ENCODE measurements at regions of chr4 and their contacts with region 1.

Region 1: DNA sequence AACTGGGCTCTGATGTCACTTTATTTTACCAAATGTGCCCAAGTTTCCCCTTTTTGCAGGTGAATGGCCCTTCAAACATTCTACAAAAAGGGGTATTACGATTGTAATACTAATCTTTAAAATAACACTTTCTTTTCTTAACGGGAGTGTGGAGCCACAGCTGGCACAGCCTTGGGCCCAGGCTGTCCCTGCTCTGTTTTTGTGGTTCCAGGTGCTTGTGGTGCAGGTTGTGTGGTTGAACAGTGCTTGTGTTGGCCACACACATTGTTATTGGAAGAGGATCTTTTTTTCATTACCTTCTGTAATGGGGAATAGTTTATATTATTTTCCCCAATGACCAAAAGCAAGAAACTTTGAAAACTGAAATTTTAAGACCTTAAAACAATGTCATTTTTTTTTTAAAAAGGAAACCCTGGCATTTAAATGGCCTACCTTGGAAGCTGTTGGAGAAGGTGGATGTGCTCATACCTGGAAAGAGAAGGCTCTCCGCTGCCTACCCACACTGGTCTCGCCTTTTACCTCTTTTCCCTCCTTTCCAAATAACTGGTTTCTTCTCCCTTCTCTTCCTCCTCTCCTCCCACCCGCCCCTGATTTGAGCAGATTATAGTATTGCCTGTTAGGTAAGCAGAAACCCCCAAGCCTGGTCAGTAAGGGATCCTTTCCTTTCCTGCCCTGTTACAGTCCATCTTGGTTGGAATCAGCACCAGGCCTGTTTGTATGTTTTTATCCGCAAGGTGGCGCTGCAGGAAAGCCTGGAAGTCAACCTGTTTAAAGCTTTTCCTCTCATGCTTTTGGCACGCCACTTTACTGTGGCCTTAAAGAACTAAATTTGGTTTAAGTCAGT is 28.6 kb downstream of the HADH start:
- DNase-seq: peak; percentile 55
- ATAC-seq: peak; percentile 90
- H3K4me3 ChIP-seq: no peak overlapping the region
- H3K27ac ChIP-seq: no peak overlapping the region
- H3K4me1 ChIP-seq: no peaks in the 10 kb centered on the region
- H3K27me3 ChIP-seq: no peaks in the 10 kb centered on the region
- CTCF ChIP-seq: peak; percentile 60 to 92 (median 80); a peak in 5 of 6 replicates
- POLR2A ChIP-seq: no peak
- RAD21 ChIP-seq: peak; percentile 79

Region 2: DNA sequence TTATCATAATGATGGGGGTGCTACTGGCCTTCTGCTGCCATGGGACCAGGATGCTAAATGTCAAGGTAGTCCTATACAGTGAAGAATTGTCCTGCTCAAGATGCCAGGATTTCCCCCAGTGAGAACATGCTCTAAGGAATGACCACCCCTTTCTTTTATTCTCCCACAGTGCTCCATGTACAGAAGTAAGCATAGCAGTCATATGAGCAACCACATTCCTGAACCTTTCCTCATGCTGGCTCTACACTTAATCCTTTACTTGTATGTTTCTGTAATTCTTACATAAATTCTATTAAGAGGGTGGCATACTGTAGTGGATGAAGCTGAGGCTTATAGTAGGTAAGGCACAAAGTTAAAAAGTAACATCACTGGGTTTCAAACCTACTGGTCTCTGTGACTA is 66.7 kb before region 1 on chr4:
- CTCF ChIA-PET with region 1: no interaction called
- POLR2A ChIA-PET with region 1: no interaction called
- RAD21 ChIA-PET with region 1: no interaction called
- intact Hi-C with region 1: no loop called
- DNase-seq: no peak
- ATAC-seq: no peak
- H3K4me3 ChIP-seq: no peak overlapping the region
- H3K27ac ChIP-seq: no peak overlapping the region
- H3K4me1 ChIP-seq: no peaks in the 10 kb centered on the region
- H3K27me3 ChIP-seq: no peaks in the 10 kb centered on the region
- CTCF ChIP-seq: no peak
- POLR2A ChIP-seq: no peak
- RAD21 ChIP-seq: no peak

Region 3: GRCh38 chr4:108060164-108060563 is 41.9 kb after region 1 on chr4:
- CTCF ChIA-PET with region 1: interaction called, 11 read pairs
- POLR2A ChIA-PET with region 1: no interaction called
- RAD21 ChIA-PET with region 1: no interaction called
- intact Hi-C with region 1: no loop called
- DNase-seq: peak; percentile 41
- ATAC-seq: peak; percentile 66
- H3K4me3 ChIP-seq: no peak overlapping the region
- H3K27ac ChIP-seq: no peak overlapping the region
- H3K4me1 ChIP-seq: peaks cover 0 to 22% of the 10 kb centered on the region in 2 experiments; a peak in 2 of 4 replicates
- H3K27me3 ChIP-seq: no peaks in the 10 kb centered on the region
- CTCF ChIP-seq: peak; percentile 32 to 57 (median 42); a peak in 4 of 6 replicates
- POLR2A ChIP-seq: no peak
- RAD21 ChIP-seq: peak; percentile 82

Region 4: GRCh38 chr4:108492816-108493595 is 474.7 kb after region 1 on chr4:
- CTCF ChIA-PET with region 1: interaction called, 3 read pairs
- POLR2A ChIA-PET with region 1: no interaction called
- RAD21 ChIA-PET with region 1: interaction called in 1 of 2 experiments, 3 read pairs
- intact Hi-C with region 1: loop called (anchors 2 kb)
- DNase-seq: peak; percentile 21
- ATAC-seq: peak; percentile 100
- H3K4me3 ChIP-seq: no peak overlapping the region
- H3K27ac ChIP-seq: no peak overlapping the region
- H3K4me1 ChIP-seq: no peaks in the 10 kb centered on the region
- H3K27me3 ChIP-seq: no peaks in the 10 kb centered on the region
- CTCF ChIP-seq: peak; percentile 35 to 75 (median 73); a peak in 5 of 6 replicates
- POLR2A ChIP-seq: no peak
- RAD21 ChIP-seq: peak; percentile 69

Region 5: GRCh38 chr4:108570993-108571569 is 552.8 kb after region 1 on chr4:
- CTCF ChIA-PET with region 1: interaction called, 30 read pairs
- POLR2A ChIA-PET with region 1: no interaction called
- RAD21 ChIA-PET with region 1: interaction called in 1 of 2 experiments, 6 read pairs
- intact Hi-C with region 1: loop called (anchors 2 kb)
- DNase-seq: no peak
- ATAC-seq: no peak
- H3K4me3 ChIP-seq: no peak overlapping the region
- H3K27ac ChIP-seq: no peak overlapping the region
- H3K4me1 ChIP-seq: no peaks in the 10 kb centered on the region
- H3K27me3 ChIP-seq: no peaks in the 10 kb centered on the region
- CTCF ChIP-seq: no peak
- POLR2A ChIP-seq: no peak
- RAD21 ChIP-seq: no peak

Region 6: DNA sequence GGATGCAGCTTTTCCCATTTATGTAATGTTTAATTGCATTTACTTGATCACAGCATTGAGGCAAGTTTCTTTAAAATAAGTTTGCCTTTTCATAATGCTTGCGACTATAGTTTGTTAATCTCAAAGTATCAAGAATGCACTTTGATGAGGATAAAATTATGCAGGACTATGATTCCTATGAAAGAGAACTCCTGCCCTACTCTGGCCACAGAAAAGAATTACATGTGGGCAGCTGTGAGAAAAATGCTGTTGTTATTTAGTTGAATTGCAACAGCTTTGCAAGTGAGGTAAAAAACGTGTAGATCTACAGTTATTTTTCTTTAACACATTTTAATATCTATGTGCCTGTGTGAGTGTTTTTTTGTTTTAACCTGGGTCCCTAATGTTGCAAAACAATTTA is 619.6 kb after region 1 on chr4:
- CTCF ChIA-PET with region 1: interaction called, 5 read pairs
- POLR2A ChIA-PET with region 1: no interaction called
- RAD21 ChIA-PET with region 1: no interaction called
- intact Hi-C with region 1: loop called (anchors 5 kb)
- DNase-seq: no peak
- ATAC-seq: no peak
- H3K4me3 ChIP-seq: no peak overlapping the region
- H3K27ac ChIP-seq: no peak overlapping the region
- H3K4me1 ChIP-seq: no peaks in the 10 kb centered on the region
- H3K27me3 ChIP-seq: no peaks in the 10 kb centered on the region
- CTCF ChIP-seq: peak in 1 of 3 experiments; percentile 28; a peak in 1 of 6 replicates
- POLR2A ChIP-seq: no peak
- RAD21 ChIP-seq: peak; percentile 41

Region 7: DNA sequence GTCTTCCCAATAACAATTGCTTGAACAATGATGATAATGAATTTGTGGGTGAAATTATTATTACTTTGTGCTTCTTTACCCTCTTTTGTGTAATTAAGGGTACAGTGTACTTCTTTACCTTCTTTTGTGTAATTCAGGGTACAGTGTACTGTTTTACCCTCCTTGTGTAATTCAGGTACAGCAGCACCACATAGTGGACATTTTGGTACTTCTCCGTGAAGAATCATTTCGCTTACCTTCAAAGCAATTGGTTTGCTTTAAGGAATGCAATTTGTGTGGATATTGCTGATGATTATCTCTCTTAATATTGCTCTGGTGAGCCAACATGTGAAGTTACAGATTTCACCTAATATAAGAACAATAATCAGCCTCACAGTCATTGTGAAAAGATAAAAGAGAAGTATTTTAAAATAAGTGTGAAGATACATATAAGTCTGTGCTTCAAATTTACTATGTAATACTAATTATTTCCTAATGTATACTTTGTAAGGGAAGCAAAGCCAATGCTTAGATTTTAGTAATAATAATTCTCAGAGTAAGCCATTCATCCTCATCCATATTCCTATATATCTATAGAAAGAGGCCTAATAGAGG is 1388.2 kb after region 1 on chr4:
- CTCF ChIA-PET with region 1: no interaction called
- POLR2A ChIA-PET with region 1: no interaction called
- RAD21 ChIA-PET with region 1: no interaction called
- intact Hi-C with region 1: loop called (anchors 10 kb)
- DNase-seq: peak; percentile 59
- ATAC-seq: peak; percentile 88
- H3K4me3 ChIP-seq: no peak overlapping the region
- H3K27ac ChIP-seq: no peak overlapping the region
- H3K4me1 ChIP-seq: peaks cover 0 to 7% of the 10 kb centered on the region in 2 experiments; a peak in 1 of 4 replicates
- H3K27me3 ChIP-seq: no peaks in the 10 kb centered on the region; the same call in 1 of the 2 replicates
- CTCF ChIP-seq: peak; percentile 46 to 82 (median 68); a peak in 5 of 6 replicates
- POLR2A ChIP-seq: no peak
- RAD21 ChIP-seq: peak; percentile 76

Measured in HCT116 (cell line).